CD4-positive, alpha-beta T cell (primary cell): ENCODE measurements at regions of chr1 and their contacts with region 1.

Region 1: GRCh38 chr1:219833214-219833815 is 95.0 kb downstream of the SLC30A10 start:
- DNase-seq: no peak
- ATAC-seq: no peak
- H3K4me3 ChIP-seq: no peak overlapping the region
- H3K4me3 Mint-ChIP-seq: no peak overlapping the region
- H3K27ac ChIP-seq: no peak overlapping the region
- H3K27ac Mint-ChIP-seq: no peak overlapping the region
- H3K4me1 ChIP-seq: no peaks in the 10 kb centered on the region
- H3K4me1 Mint-ChIP-seq: no peaks in the 10 kb centered on the region
- H3K27me3 ChIP-seq: peaks cover 3% of the 10 kb centered on the region in 2 experiments
- H3K27me3 Mint-ChIP-seq: peaks cover 11% of the 10 kb centered on the region
- CTCF ChIP-seq: no peak

Region 2: GRCh38 chr1:219518168-219518907 is 315.0 kb before region 1 on chr1:
- CTCF ChIA-PET with region 1: no interaction called
- POLR2A ChIA-PET with region 1: no interaction called
- intact Hi-C with region 1: no loop called
- DNase-seq: no peak
- ATAC-seq: no peak
- H3K4me3 ChIP-seq: no peak overlapping the region
- H3K4me3 Mint-ChIP-seq: no peak overlapping the region
- H3K27ac ChIP-seq: no peak overlapping the region
- H3K27ac Mint-ChIP-seq: no peak overlapping the region
- H3K4me1 ChIP-seq: no peaks in the 10 kb centered on the region
- H3K4me1 Mint-ChIP-seq: no peaks in the 10 kb centered on the region
- H3K27me3 ChIP-seq: no peaks in the 10 kb centered on the region
- H3K27me3 Mint-ChIP-seq: no peaks in the 10 kb centered on the region
- CTCF ChIP-seq: no peak

Region 3: GRCh38 chr1:219817914-219818313 is 15.4 kb before region 1 on chr1:
- CTCF ChIA-PET with region 1: no interaction called
- POLR2A ChIA-PET with region 1: no interaction called
- intact Hi-C with region 1: loop called in 1 of 2 experiments (anchors 2 kb)
- DNase-seq: no peak
- ATAC-seq: no peak
- H3K4me3 ChIP-seq: no peak overlapping the region
- H3K4me3 Mint-ChIP-seq: no peak overlapping the region
- H3K27ac ChIP-seq: no peak overlapping the region
- H3K27ac Mint-ChIP-seq: no peak overlapping the region
- H3K4me1 ChIP-seq: no peaks in the 10 kb centered on the region
- H3K4me1 Mint-ChIP-seq: no peaks in the 10 kb centered on the region
- H3K27me3 ChIP-seq: peaks cover 0 to 3% of the 10 kb centered on the region in 2 experiments
- H3K27me3 Mint-ChIP-seq: peaks cover 4% of the 10 kb centered on the region
- CTCF ChIP-seq: no peak

Region 4: GRCh38 chr1:219847215-219847861 is 14.0 kb after region 1 on chr1:
- CTCF ChIA-PET with region 1: no interaction called
- POLR2A ChIA-PET with region 1: no interaction called
- intact Hi-C with region 1: no loop called
- DNase-seq: no peak
- ATAC-seq: no peak
- H3K4me3 ChIP-seq: no peak overlapping the region
- H3K4me3 Mint-ChIP-seq: no peak overlapping the region
- H3K27ac ChIP-seq: no peak overlapping the region
- H3K27ac Mint-ChIP-seq: no peak overlapping the region
- H3K4me1 ChIP-seq: no peaks in the 10 kb centered on the region
- H3K4me1 Mint-ChIP-seq: no peaks in the 10 kb centered on the region
- H3K27me3 ChIP-seq: no peaks in the 10 kb centered on the region
- H3K27me3 Mint-ChIP-seq: no peaks in the 10 kb centered on the region
- CTCF ChIP-seq: no peak

Region 5: GRCh38 chr1:219871427-219872057 is 38.2 kb after region 1 on chr1:
- CTCF ChIA-PET with region 1: no interaction called
- POLR2A ChIA-PET with region 1: no interaction called
- intact Hi-C with region 1: no loop called
- DNase-seq: no peak
- ATAC-seq: no peak
- H3K4me3 ChIP-seq: no peak overlapping the region
- H3K4me3 Mint-ChIP-seq: no peak overlapping the region
- H3K27ac ChIP-seq: no peak overlapping the region
- H3K27ac Mint-ChIP-seq: no peak overlapping the region
- H3K4me1 ChIP-seq: no peaks in the 10 kb centered on the region
- H3K4me1 Mint-ChIP-seq: no peaks in the 10 kb centered on the region
- H3K27me3 ChIP-seq: peaks cover 0 to 4% of the 10 kb centered on the region in 2 experiments
- H3K27me3 Mint-ChIP-seq: peaks cover 8% of the 10 kb centered on the region
- CTCF ChIP-seq: no peak